ENCODE measurements at regions of chr7 and their contacts with region 1.

Region 1: DNA sequence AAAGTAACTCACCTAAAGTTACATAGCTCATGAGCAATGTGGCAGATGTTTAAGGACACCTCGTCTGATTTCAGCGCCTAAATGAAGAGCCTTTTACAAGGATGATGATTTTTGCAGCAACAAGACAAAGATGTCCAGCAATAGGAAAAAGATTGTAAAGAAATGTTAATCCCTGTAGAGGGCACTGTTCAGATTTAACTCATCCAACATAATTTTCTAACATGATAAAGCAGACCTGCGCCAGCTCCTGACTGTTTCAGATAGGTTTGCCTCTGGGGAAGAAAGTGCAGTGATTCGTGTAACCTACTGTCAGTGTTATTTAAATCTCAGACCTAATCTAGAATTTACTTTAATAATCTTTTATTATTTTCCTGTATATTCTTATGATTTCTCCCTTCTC is 595.2 kb downstream of the AUTS2 start:
- DNase-seq: peak; percentile 18

Region 2: DNA sequence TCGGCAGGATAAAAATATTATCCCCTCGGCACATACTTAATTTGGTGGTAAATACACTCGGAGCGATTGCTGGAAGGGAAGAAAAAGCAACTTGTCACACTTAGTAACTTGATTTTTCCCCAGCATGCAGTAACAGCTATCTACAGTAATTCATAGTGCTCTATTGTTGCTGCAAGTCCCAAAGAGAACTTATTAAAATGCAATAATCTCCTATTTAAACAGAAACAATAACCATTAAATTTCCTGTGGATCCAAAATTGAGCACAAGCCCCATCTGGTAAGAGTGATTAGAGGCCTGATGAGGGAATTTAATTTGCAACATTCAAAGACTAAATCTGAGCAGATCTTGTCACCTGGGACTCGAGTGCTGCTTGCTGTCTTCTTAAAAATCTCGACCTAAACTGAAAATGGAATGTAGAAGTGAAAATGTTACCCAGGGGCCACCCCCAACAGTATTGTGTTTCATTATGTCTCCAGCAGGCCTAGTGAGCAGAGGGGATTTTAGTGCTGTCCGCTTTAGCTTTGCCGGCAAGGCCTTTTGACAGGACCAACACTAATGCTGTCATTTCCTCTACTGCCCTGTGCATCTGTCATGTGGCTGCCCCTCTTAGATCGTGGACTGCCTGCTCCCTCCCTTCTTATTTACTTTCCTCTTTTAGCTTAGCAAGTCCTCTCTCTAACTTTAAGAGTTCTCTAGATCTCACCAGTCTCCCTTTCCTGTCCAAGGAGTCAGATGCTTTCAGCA is 44.5 kb after region 1 on chr7:
- CTCF ChIA-PET with region 1: interaction called, 11 read pairs
- POLR2A ChIA-PET with region 1: no interaction called
- DNase-seq: peak; percentile 10

Measured in HEK293T (cell line).